Right ventricle myocardium superior (tissue), 1 donor: ENCODE measurements at regions of chr4 and their contacts with region 1.

Region 1: GRCh38 chr4:145234091-145234706 is 53.8 kb upstream of the OTUD4 start:
- DNase-seq: no peak
- ATAC-seq: peak; percentile 66

Region 2: DNA sequence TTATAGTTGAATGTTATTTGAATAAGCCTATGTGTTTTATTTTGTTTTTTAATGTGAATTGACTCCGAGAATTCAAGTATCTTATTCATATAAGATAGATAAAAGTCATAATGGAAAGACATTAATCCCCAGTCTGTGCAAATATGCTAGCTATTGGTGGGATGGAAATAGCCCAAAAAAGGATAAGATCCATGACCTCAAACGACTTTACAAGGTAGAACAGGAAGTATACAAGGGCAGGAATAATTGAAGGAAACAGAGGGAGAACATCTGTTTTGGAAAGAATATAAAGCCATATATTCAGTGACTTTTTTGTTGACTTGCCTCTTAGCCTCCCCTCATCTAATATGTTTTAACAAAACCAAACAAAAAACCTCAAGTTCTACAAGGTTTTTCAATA is 127.1 kb before region 1 on chr4:
- intact Hi-C with region 1: no loop called
- DNase-seq: no peak
- ATAC-seq: no peak

Region 3: GRCh38 chr4:145299380-145300076 is 65.3 kb after region 1 on chr4:
- intact Hi-C with region 1: no loop called
- DNase-seq: no peak
- ATAC-seq: no peak

Region 4: DNA sequence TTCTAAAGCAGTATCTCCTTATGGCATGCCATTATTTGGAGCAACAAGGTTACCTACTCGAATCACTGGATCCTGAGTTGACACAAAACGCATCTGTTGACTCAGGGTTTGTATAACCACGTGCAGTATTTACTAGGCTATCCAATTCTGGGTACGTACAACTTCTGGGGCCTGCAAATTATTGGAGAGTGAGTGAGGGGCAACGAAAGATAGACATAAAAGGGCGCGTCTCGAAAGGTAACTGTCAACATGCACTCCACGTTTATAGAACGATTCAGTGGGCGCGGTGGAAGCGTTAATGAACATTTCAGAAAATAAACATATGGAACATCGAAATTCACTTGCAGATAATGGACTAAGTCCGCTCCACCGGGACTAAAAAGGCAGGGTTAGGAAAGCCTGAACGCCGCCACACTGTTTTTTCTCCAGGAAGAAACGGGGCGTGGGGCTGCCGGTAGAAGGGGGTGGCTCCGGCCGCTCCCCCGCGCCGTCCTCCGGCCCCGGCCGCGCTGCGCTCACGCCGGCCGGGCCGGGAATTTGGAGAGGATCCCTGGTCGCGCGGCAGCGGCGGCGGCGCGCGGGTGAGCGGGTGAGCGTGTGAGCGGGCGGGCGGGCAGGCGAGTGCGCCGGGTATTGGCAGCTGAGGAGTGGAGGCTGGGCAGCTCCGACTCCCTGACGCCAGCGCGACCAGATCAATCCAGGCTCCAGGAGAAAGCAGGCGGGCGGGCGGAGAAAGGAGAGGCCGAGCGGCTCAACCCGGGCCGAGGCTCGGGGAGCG is 247.2 kb after region 1 on chr4 and contains the start of gene SMAD1:
- intact Hi-C with region 1: no loop called
- DNase-seq: peak; percentile 91
- ATAC-seq: peak; percentile 96
- total RNA-seq, gene SMAD1: 8.9 TPM

Region 5: DNA sequence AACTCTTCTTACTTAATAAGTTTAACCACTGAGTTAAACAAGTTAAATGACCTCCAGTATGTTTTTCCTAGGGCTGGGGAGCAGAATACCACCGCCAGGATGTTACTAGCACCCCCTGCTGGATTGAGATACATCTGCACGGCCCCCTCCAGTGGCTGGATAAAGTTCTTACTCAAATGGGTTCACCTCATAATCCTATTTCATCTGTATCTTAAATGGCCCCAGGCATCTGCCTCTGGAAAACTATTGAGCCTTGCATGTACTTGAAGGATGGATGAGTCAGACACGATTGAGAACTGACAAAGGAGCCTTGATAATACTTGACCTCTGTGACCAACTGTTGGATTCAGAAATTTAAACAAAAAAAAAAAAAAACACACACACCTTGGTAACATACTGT is 323.5 kb after region 1 on chr4:
- intact Hi-C with region 1: loop called (anchors 2 kb)
- DNase-seq: peak; percentile 50
- ATAC-seq: peak; percentile 92

Region 6: GRCh38 chr4:145609481-145610427 is 375.6 kb after region 1 on chr4:
- intact Hi-C with region 1: loop called (anchors 5 kb)
- DNase-seq: peak; percentile 56
- ATAC-seq: peak; percentile 63